IMR-90 (cell line): ENCODE measurements at regions of chr1 and their contacts with region 1.

Region 1: GRCh38 chr1:78355656-78356055 is 135.1 kb upstream of the PTGFR start:
- DNase-seq: peak; percentile 35
- ATAC-seq: peak; percentile 66
- H3K4me3 ChIP-seq: no peak overlapping the region
- H3K27ac ChIP-seq: peak overlapping the region; percentile 76; the same call in 1 of the 2 replicates
- H3K4me1 ChIP-seq: peaks cover 2% of the 10 kb centered on the region
- H3K27me3 ChIP-seq: no peaks in the 10 kb centered on the region
- CTCF ChIP-seq: no peak
- POLR2A ChIP-seq: no peak
- RAD21 ChIP-seq: no peak

Region 2: GRCh38 chr1:78229344-78229743 is 126.3 kb before region 1 on chr1:
- CTCF ChIA-PET with region 1: no interaction called
- POLR2A ChIA-PET with region 1: no interaction called
- dilution Hi-C with region 1: no loop called
- in situ Hi-C with region 1: no loop called
- intact Hi-C with region 1: loop called (anchors 10 kb)
- DNase-seq: peak; percentile 92
- ATAC-seq: peak; percentile 91
- H3K4me3 ChIP-seq: no peak overlapping the region
- H3K27ac ChIP-seq: no peak overlapping the region
- H3K4me1 ChIP-seq: peaks cover 4% of the 10 kb centered on the region
- H3K27me3 ChIP-seq: no peaks in the 10 kb centered on the region
- CTCF ChIP-seq: no peak
- POLR2A ChIP-seq: no peak
- RAD21 ChIP-seq: no peak